Transverse colon (tissue), 4 donors: ENCODE measurements at regions of chr6 and their contacts with region 1.

Region 1: DNA sequence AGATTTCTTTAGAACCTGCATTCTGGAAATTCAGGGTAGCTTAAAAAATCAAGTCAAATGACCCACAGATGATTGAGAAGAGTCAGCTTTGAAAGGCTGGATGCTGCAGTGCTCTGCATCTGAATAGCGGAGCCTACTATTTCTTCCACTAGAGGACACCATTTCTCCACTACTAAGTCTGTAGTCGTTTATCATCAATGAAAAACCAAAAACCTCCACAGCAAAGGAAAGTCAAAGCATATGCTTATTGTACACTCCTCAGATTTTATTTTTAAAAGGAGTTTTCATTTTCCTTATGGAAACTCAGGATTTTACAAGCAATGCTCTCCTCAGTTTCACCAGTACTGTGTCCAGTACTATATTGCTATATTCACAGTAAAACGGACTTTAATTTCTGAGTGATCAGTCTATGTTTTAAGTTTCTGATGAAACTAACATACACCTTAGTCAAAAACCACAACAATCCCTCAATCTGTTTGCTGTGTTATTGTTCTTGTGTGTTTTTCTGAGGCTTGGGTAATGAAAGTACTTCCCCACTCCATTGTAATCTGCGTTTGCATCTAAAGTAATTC is 50.5 kb upstream of the ENPP5 start:
- DNase-seq: no peak
- H3K4me3 ChIP-seq: no peak overlapping the region
- H3K27ac ChIP-seq: no peak overlapping the region
- H3K4me1 ChIP-seq: peaks cover 0 to 3% (median 0%) of the 10 kb centered on the region in 4 donors
- H3K27me3 ChIP-seq: no peaks in the 10 kb centered on the region
- CTCF ChIP-seq: peak; percentile 70 to 91 (median 82)
- EP300 ChIP-seq: no peak
- POLR2A ChIP-seq: no peak

Region 2: GRCh38 chr6:45522486-45522885 is 698.8 kb before region 1 on chr6:
- in situ Hi-C with region 1: no loop called
- intact Hi-C with region 1: no loop called
- DNase-seq: no peak
- H3K4me3 ChIP-seq: no peak overlapping the region
- H3K27ac ChIP-seq: no peak overlapping the region
- H3K4me1 ChIP-seq: peaks cover 0 to 22% (median 11%) of the 10 kb centered on the region in 4 donors
- H3K27me3 ChIP-seq: no peaks in the 10 kb centered on the region
- CTCF ChIP-seq: no peak
- EP300 ChIP-seq: no peak
- POLR2A ChIP-seq: no peak

Region 3: DNA sequence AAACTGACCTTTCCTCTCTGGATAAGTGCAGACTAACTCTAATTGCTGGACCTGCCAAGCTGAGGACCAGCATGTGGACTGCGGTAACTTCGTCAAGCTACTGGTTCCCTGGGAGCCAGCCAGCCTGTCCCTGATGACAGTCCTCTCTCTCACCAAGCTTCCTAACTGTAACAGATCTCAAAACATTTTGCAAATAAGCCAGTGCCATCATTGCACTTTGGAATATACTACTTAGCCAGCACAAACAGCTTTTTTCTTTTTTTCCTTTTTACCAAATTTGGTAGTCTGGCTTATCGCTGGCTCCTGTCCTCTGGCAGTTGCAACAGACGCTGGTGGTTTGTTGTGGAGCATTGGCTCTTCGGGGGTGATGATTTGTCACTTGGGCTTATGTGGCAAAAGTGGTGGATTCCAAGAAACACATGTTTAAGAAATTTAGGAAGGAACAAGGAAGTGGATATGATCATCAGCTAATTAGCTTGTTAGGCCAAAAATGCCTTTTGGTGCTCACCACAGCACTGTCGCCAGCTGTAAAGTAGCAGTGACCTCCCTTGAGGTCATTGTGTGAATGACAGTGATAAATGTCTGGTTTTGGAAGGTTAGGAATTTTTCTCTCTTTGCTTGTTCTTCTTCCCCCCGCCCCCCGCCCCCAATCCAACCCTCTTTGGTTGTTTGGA is 377.3 kb before region 1 on chr6:
- in situ Hi-C with region 1: no loop called
- intact Hi-C with region 1: no loop called
- DNase-seq: no peak
- H3K4me3 ChIP-seq: no peak overlapping the region
- H3K27ac ChIP-seq: no peak overlapping the region
- H3K4me1 ChIP-seq: no peaks in the 10 kb centered on the region
- H3K27me3 ChIP-seq: no peaks in the 10 kb centered on the region
- CTCF ChIP-seq: no peak
- EP300 ChIP-seq: no peak
- POLR2A ChIP-seq: no peak

Region 4: DNA sequence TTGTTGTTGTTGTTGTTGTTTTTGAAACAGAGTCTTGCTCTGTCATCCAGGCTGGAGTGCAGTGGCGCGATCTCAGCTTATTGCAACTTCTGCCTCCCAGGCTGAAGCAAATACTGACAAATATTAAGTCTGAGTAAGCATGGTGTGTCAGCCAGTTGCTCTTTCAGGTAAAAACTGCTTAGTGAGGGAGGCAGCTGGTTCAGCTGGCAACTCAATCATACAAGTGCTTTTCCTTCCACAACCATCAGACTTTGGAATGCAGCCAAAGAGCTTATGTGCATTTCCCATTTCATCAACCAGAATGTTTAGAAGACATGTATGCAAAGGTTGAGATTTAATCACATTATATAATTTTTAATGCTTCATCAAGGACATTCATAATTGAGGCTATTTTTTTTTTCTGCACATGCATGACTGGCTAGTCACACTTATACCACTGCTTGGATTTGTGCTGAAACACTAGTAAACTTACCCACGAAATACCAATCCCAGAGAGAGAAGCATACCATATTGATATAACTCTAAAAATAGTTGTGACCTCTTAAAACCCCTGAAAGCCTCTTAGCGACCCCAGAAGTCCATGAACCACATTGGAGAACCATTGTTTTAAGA is 261.7 kb before region 1 on chr6:
- in situ Hi-C with region 1: no loop called
- intact Hi-C with region 1: no loop called
- DNase-seq: no peak
- H3K4me3 ChIP-seq: no peak overlapping the region
- H3K27ac ChIP-seq: no peak overlapping the region
- H3K4me1 ChIP-seq: peaks cover 0 to 13% (median 2%) of the 10 kb centered on the region in 4 donors
- H3K27me3 ChIP-seq: no peaks in the 10 kb centered on the region
- CTCF ChIP-seq: no peak
- EP300 ChIP-seq: no peak
- POLR2A ChIP-seq: no peak

Region 5: DNA sequence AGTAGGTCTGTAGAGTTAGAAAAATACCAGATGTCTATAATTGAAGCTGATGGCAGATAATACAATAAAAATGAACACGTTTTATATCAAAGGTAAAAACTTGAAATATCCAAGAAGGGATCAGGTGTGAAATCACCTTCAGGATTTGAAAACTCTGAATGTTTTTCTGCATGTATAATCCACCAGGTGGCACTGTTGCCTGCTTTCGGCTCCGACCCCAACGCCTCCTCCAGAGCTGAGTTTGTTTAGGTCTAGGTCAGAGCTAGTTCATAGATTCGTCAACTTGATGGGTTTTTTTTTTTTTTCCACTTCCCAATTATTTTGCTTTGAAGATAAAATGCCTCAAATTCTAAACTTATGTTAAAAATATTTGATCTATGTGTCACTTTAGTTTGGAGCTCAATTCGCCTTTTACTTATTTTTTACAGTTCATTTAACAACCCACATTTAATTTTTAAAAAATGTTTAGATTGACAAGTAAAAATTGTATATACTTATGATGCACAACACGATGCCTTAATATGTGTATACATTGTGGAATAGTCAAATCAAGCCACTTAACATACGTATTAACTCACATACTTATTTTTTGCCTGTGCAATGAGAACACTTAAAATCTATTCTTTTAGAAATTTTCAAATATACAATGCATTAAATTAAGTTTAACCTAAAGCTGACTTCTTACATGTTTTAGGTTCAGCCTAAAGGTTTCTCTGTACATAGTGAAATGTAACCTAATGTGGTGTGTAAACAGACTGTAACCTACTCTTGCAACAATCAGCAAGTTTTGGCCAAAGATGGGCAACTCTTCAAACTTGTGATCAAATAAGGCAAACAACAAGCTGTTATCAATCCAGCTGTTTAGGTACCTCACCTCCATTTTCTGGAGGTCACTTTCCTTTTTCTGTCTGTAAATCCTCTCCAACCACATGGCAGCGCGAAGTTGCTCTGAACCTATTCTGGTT is 130.9 kb before region 1 on chr6:
- in situ Hi-C with region 1: loop called in 1 of 4 experiments (anchors 25 kb)
- intact Hi-C with region 1: no loop called
- DNase-seq: peak; percentile 66
- H3K4me3 ChIP-seq: no peak overlapping the region
- H3K27ac ChIP-seq: no peak overlapping the region
- H3K4me1 ChIP-seq: no peaks in the 10 kb centered on the region
- H3K27me3 ChIP-seq: no peaks in the 10 kb centered on the region
- CTCF ChIP-seq: peak; percentile 74 to 83 (median 79)
- EP300 ChIP-seq: no peak
- POLR2A ChIP-seq: no peak

Region 6: GRCh38 chr6:46407776-46408530 is 186.6 kb after region 1 on chr6:
- in situ Hi-C with region 1: loop called in 2 of 4 experiments (anchors 10 to 25 kb)
- intact Hi-C with region 1: loop called (anchors 10 kb)
- DNase-seq: no peak
- H3K4me3 ChIP-seq: no peak overlapping the region
- H3K27ac ChIP-seq: peak overlapping the region in 2 of 4 donors; percentile 4 to 11
- H3K4me1 ChIP-seq: peaks cover 0 to 7% (median 0%) of the 10 kb centered on the region in 4 donors
- H3K27me3 ChIP-seq: no peaks in the 10 kb centered on the region
- CTCF ChIP-seq: no peak
- EP300 ChIP-seq: no peak
- POLR2A ChIP-seq: no peak

Region 7: GRCh38 chr6:46626228-46626909 is 405.1 kb after region 1 on chr6:
- in situ Hi-C with region 1: loop called in 3 of 4 experiments (anchors 25 kb)
- intact Hi-C with region 1: loop called (anchors 10 kb)
- DNase-seq: no peak
- H3K4me3 ChIP-seq: no peak overlapping the region
- H3K27ac ChIP-seq: no peak overlapping the region
- H3K4me1 ChIP-seq: peaks cover 0 to 6% (median 2%) of the 10 kb centered on the region in 4 donors
- H3K27me3 ChIP-seq: no peaks in the 10 kb centered on the region
- CTCF ChIP-seq: peak; percentile 52 to 66 (median 60)
- EP300 ChIP-seq: no peak
- POLR2A ChIP-seq: no peak